ENCODE measurements at regions of chr18 and their contacts with region 1.

Region 1: GRCh38 chr18:79951578-79952455 is at the start of gene SLC66A2:
- DNase-seq: peak; percentile 89
- H3K4me3 Mint-ChIP-seq: peak within 1 kb of the TSS; percentile 89
- H3K27ac Mint-ChIP-seq: peak within 1 kb of the TSS; percentile 82
- H3K4me1 Mint-ChIP-seq: peaks cover 37% of the 10 kb centered on the region
- H3K27me3 Mint-ChIP-seq: no peaks in the 10 kb centered on the region
- total RNA-seq, gene SLC66A2: 49.2 and 54.6 TPM in 2 replicates

Region 2: GRCh38 chr18:79890674-79891073 is 61.1 kb before region 1 on chr18:
- intact Hi-C with region 1: loop called (anchors 5 kb)
- DNase-seq: no peak
- H3K4me3 Mint-ChIP-seq: peak overlapping the region; percentile 17
- H3K27ac Mint-ChIP-seq: peak overlapping the region; percentile 24
- H3K4me1 Mint-ChIP-seq: peaks cover 10% of the 10 kb centered on the region
- H3K27me3 Mint-ChIP-seq: no peaks in the 10 kb centered on the region

Region 3: DNA sequence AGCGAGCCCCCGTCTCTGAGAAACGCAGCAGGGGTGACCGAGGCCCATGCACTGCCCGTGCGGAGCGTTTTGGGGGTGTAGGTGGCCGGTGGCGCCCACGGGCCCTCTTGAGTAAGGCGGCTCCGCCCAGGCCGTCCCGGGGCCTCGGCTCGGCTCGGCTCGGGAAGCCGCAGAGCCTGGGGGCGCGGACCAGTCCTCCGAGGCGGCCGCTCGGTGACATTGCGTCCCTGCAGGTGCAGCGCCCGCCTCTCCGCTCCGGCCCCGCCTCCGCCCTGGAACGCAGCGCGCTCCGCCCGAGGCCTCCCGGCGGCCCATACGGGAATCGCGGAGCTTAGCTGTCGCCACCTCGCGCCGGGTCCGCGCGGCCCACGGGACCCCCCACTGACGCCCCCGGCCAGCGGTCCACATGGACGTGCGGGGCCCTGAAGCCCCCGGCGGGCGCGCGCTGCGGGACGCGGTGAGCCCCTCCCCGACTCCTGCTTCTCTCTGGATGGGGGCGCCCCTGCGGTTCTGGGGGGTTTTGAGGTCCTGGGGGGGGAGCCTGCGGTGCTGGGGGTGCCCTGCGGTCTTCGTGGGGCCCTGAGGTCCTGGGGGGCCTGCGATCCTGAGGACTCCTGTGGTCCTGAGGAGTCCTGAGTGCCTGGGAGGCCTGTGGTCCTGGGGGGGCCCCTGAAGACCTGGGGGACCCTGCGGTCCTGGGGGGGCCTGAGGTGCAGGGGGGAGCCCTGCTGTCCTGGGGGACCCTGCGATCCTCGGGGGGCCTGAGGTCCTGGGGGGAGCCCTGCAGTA is 12.7 kb after region 1 on chr18 and contains the start of gene HSBP1L1:
- intact Hi-C with region 1: loop called (anchors 1 kb)
- DNase-seq: peak; percentile 66
- H3K4me3 Mint-ChIP-seq: peak within 1 kb of the TSS; percentile 84
- H3K27ac Mint-ChIP-seq: peak within 1 kb of the TSS; percentile 68
- H3K4me1 Mint-ChIP-seq: peaks cover 33% of the 10 kb centered on the region
- H3K27me3 Mint-ChIP-seq: no peaks in the 10 kb centered on the region
- total RNA-seq, gene HSBP1L1: 9.0 and 10.0 TPM in 2 replicates

Region 4: GRCh38 chr18:80034068-80034851 is 82.4 kb after region 1 on chr18 and contains the start of gene RBFA:
- intact Hi-C with region 1: loop called (anchors 1 kb)
- DNase-seq: peak; percentile 98
- H3K4me3 Mint-ChIP-seq: peak within 1 kb of the TSS; percentile 87
- H3K27ac Mint-ChIP-seq: peak within 1 kb of the TSS; percentile 88
- H3K4me1 Mint-ChIP-seq: peaks cover 25% of the 10 kb centered on the region
- H3K27me3 Mint-ChIP-seq: peaks cover 4% of the 10 kb centered on the region
- total RNA-seq, gene RBFA: 48.5 and 50.3 TPM in 2 replicates

Region 5: DNA sequence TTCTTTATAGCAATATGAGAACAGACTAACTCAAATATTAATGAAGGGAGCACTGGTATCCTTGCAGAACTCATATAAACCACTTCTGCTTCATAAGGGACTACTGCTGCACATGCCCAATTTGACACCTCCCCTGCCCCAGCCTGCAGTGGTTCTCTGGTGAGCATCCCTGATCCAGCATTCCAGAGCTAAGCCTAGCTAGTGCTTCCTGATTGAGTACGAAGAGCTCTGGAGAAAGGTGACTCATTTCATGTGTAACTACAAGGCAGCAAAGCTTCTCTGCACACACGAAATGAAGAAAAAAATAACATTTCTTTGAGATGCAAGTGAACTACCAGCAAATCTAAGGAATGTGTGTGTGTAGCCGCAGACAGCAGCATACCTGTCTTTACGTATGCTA is 134.5 kb after region 1 on chr18:
- intact Hi-C with region 1: no loop called
- DNase-seq: no peak
- H3K4me3 Mint-ChIP-seq: no peak overlapping the region
- H3K27ac Mint-ChIP-seq: no peak overlapping the region
- H3K4me1 Mint-ChIP-seq: no peaks in the 10 kb centered on the region
- H3K27me3 Mint-ChIP-seq: no peaks in the 10 kb centered on the region

Region 6: DNA sequence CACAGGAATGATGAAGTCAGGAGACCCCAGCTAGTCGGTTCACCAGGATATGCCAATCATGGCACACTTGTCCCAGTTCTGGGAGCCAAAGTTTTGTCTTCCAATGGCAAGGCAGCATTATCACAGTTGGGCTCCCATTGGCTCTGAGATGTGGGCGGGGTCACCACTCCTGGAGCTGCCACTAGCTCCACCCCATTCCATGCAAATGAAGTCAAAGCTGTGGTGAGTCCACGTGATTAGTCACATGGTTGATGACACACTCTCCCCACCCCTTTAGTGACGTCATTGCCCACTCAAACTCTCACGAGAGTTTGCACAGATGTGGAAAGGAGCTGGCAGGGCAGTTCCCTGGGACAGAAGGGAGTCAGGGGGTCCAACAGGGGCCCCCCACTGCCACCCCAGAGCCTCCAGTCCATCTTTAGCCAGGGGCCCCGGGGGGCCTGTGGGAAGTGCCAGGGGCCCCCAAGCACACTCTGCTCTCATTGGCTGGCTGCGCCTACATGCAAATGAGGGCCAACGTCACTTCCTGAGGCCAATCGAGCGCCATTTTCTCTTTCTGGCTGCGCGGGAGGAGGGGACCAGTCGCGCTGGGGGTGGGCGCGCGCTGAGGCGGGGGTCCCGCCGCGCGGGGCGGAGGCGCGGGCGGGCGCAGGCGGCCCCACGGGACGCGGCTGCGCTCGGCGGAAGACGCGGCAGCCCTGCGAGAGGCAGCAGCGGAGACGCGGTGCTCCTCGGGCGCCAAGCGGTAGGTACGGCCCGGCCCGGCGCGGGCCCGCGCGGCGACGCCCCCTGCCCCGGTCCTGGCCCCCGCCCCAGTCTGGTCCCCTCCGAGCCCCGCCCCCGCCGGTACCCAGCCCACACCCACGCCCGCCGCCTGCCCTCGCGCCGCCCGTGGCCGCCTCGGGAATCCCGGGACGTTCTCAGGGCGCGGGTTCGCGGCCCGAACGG is 157.2 kb after region 1 on chr18 and contains the start of gene ADNP2:
- intact Hi-C with region 1: loop called (anchors 2 kb)
- DNase-seq: peak; percentile 81
- H3K4me3 Mint-ChIP-seq: peak within 1 kb of the TSS; percentile 86
- H3K27ac Mint-ChIP-seq: peak within 1 kb of the TSS; percentile 86
- H3K4me1 Mint-ChIP-seq: peaks cover 24% of the 10 kb centered on the region
- H3K27me3 Mint-ChIP-seq: peaks cover 6% of the 10 kb centered on the region
- total RNA-seq, gene ADNP2: 29.0 TPM in 2 replicates

Measured in activated T-helper 1 cell treated with anti-CD3 and anti-CD28 coated beads, Interleukin-12 subunit alpha, Interleukin-12 subunit beta, Interleukin-2, Interleukin-4 antibody, amounts not matched to agents 30 ng/mL and 10 ng/mL and 1 ng/mL, durations not matched to agents 14 hours and 24 hours and 36 hours (primary cell).